ENCODE measurements at regions of chr1 and their contacts with region 1.

Region 1: GRCh38 chr1:169485544-169486278 is at the start of gene SLC19A2:
- DNase-seq: peak; percentile 97 to 98 (median 97)
- H3K4me3 ChIP-seq: peak within 1 kb of the TSS; percentile 56 to 79 (median 70)
- H3K4me3 Mint-ChIP-seq: peak within 1 kb of the TSS; percentile 95 to 98
- H3K27ac ChIP-seq: peak within 1 kb of the TSS; percentile 83 to 87
- H3K27ac Mint-ChIP-seq: peak within 1 kb of the TSS; percentile 89 to 97 (median 93)
- H3K4me1 ChIP-seq: peaks cover 31 to 36% of the 10 kb centered on the region in 2 donors
- H3K4me1 Mint-ChIP-seq: peaks cover 37% of the 10 kb centered on the region
- H3K27me3 ChIP-seq: no peaks in the 10 kb centered on the region
- H3K27me3 Mint-ChIP-seq: peaks cover 0 to 3% (median 3%) of the 10 kb centered on the region in 3 donors
- CTCF ChIP-seq: no peak
- polyA plus RNA-seq, gene SLC19A2: 0.52 to 3.2 (median 0.81) TPM

Region 2: GRCh38 chr1:169367486-169368405 is 118.0 kb before region 1 on chr1 and contains the starts of genes BLZF1 and NME7:
- intact Hi-C with region 1: loop called in 1 of 2 experiments (anchors 5 kb)
- DNase-seq: peak; percentile 94 to 97 (median 96)
- H3K4me3 ChIP-seq: peak within 1 kb of the TSS; percentile 76 to 100 (median 84)
- H3K4me3 Mint-ChIP-seq: no peak within 1 kb of the TSS
- H3K27ac ChIP-seq: peak within 1 kb of the TSS; percentile 65 to 92
- H3K27ac Mint-ChIP-seq: peak within 1 kb of the TSS in 1 of 7 donors; percentile 20
- H3K4me1 ChIP-seq: peaks cover 7 to 18% of the 10 kb centered on the region in 2 donors
- H3K4me1 Mint-ChIP-seq: peaks cover 9% of the 10 kb centered on the region
- H3K27me3 ChIP-seq: no peaks in the 10 kb centered on the region
- H3K27me3 Mint-ChIP-seq: no peaks in the 10 kb centered on the region
- CTCF ChIP-seq: no peak
- polyA plus RNA-seq, gene BLZF1: 4.8 to 7.9 (median 5.5) TPM
- polyA plus RNA-seq, gene NME7: 3.5 to 8.0 (median 6.0) TPM

Region 3: GRCh38 chr1:169724168-169724567 is 238.5 kb after region 1 on chr1:
- intact Hi-C with region 1: no loop called
- DNase-seq: no peak
- H3K4me3 ChIP-seq: no peak overlapping the region
- H3K4me3 Mint-ChIP-seq: no peak overlapping the region
- H3K27ac ChIP-seq: no peak overlapping the region
- H3K27ac Mint-ChIP-seq: no peak overlapping the region
- H3K4me1 ChIP-seq: no peaks in the 10 kb centered on the region
- H3K4me1 Mint-ChIP-seq: no peaks in the 10 kb centered on the region
- H3K27me3 ChIP-seq: no peaks in the 10 kb centered on the region
- H3K27me3 Mint-ChIP-seq: peaks cover 0 to 2% (median 0%) of the 10 kb centered on the region in 3 donors
- CTCF ChIP-seq: no peak